CD8-positive, alpha-beta T cell (primary cell): ENCODE measurements at regions of chr5 and their contacts with region 1.

Region 1: GRCh38 chr5:1344975-1345838 is at the start of gene CLPTM1L:
- DNase-seq: peak; percentile 71 to 96 (median 88)
- ATAC-seq: peak; percentile 95
- H3K4me3 ChIP-seq: peak within 1 kb of the TSS; percentile 81 to 98
- H3K4me3 Mint-ChIP-seq: peak within 1 kb of the TSS; percentile 85
- H3K27ac ChIP-seq: peak within 1 kb of the TSS; percentile 82 to 89
- H3K27ac Mint-ChIP-seq: peak within 1 kb of the TSS; percentile 81
- H3K4me1 ChIP-seq: peaks cover 23% of the 10 kb centered on the region
- H3K4me1 Mint-ChIP-seq: peaks cover 28% of the 10 kb centered on the region
- H3K27me3 ChIP-seq: no peaks in the 10 kb centered on the region
- H3K27me3 Mint-ChIP-seq: no peaks in the 10 kb centered on the region
- CTCF ChIP-seq: no peak
- total RNA-seq, gene CLPTM1L: 56.8 to 58.9 TPM

Region 2: GRCh38 chr5:1167728-1168709 is 177.2 kb before region 1 on chr5:
- CTCF ChIA-PET with region 1: interaction called, 4 read pairs
- POLR2A ChIA-PET with region 1: no interaction called
- intact Hi-C with region 1: loop called (anchors 1 to 5 kb)
- DNase-seq: peak; percentile 31 to 83 (median 71)
- ATAC-seq: peak; percentile 86
- H3K4me3 ChIP-seq: peak overlapping the region; percentile 19 to 31
- H3K4me3 Mint-ChIP-seq: peak overlapping the region; percentile 80
- H3K27ac ChIP-seq: no peak overlapping the region
- H3K27ac Mint-ChIP-seq: no peak overlapping the region
- H3K4me1 ChIP-seq: peaks cover 7% of the 10 kb centered on the region
- H3K4me1 Mint-ChIP-seq: peaks cover 16% of the 10 kb centered on the region
- H3K27me3 ChIP-seq: peaks cover 0 to 3% of the 10 kb centered on the region in 2 experiments
- H3K27me3 Mint-ChIP-seq: peaks cover 6% of the 10 kb centered on the region
- CTCF ChIP-seq: peak; percentile 87

Region 3: DNA sequence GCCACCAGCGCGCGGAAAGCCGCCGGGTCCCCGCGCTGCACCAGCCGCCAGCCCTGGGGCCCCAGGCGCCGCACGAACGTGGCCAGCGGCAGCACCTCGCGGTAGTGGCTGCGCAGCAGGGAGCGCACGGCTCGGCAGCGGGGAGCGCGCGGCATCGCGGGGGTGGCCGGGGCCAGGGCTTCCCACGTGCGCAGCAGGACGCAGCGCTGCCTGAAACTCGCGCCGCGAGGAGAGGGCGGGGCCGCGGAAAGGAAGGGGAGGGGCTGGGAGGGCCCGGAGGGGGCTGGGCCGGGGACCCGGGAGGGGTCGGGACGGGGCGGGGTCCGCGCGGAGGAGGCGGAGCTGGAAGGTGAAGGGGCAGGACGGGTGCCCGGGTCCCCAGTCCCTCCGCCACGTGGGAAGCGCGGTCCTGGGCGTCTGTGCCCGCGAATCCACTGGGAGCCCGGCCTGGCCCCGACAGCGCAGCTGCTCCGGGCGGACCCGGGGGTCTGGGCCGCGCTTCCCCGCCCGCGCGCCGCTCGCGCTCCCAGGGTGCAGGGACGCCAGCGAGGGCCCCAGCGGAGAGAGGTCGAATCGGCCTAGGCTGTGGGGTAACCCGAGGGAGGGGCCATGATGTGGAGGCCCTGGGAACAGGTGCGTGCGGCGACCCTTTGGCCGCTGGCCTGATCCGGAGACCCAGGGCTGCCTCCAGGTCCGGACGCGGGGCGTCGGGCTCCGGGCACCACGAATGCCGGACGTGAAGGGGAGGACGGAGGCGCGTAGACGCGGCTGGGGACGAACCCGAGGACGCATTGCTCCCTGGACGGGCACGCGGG is 50.2 kb before region 1 on chr5 and contains the start of gene TERT:
- CTCF ChIA-PET with region 1: no interaction called
- POLR2A ChIA-PET with region 1: no interaction called
- intact Hi-C with region 1: loop called in 1 of 2 experiments (anchors 1 kb)
- DNase-seq: peak; percentile 41 to 71 (median 60)
- ATAC-seq: peak; percentile 87
- H3K4me3 ChIP-seq: peak within 1 kb of the TSS in 1 of 2 experiments; percentile 23
- H3K4me3 Mint-ChIP-seq: peak within 1 kb of the TSS; percentile 58
- H3K27ac ChIP-seq: no peak within 1 kb of the TSS
- H3K27ac Mint-ChIP-seq: no peak within 1 kb of the TSS
- H3K4me1 ChIP-seq: peaks cover 8% of the 10 kb centered on the region
- H3K4me1 Mint-ChIP-seq: peaks cover 4% of the 10 kb centered on the region
- H3K27me3 ChIP-seq: peaks cover 0 to 8% of the 10 kb centered on the region in 2 experiments
- H3K27me3 Mint-ChIP-seq: peaks cover 3% of the 10 kb centered on the region
- CTCF ChIP-seq: no peak
- total RNA-seq, gene TERT: 0.08 TPM in 1 of 2 experiments, not detected in the other

Region 4: GRCh38 chr5:1380011-1380817 is 35.0 kb after region 1 on chr5:
- CTCF ChIA-PET with region 1: interaction called, 11 read pairs
- POLR2A ChIA-PET with region 1: interaction called, 24 read pairs
- intact Hi-C with region 1: no loop called
- DNase-seq: peak; percentile 21 to 80 (median 57)
- ATAC-seq: peak; percentile 92
- H3K4me3 ChIP-seq: peak overlapping the region; percentile 14 to 37
- H3K4me3 Mint-ChIP-seq: peak overlapping the region; percentile 81
- H3K27ac ChIP-seq: no peak overlapping the region
- H3K27ac Mint-ChIP-seq: no peak overlapping the region
- H3K4me1 ChIP-seq: peaks cover 12% of the 10 kb centered on the region
- H3K4me1 Mint-ChIP-seq: peaks cover 8% of the 10 kb centered on the region
- H3K27me3 ChIP-seq: no peaks in the 10 kb centered on the region
- H3K27me3 Mint-ChIP-seq: no peaks in the 10 kb centered on the region
- CTCF ChIP-seq: peak; percentile 85

Region 5: GRCh38 chr5:1523771-1524480 is 178.7 kb after region 1 on chr5 and contains the start of gene LPCAT1:
- CTCF ChIA-PET with region 1: no interaction called
- POLR2A ChIA-PET with region 1: no interaction called
- intact Hi-C with region 1: loop called in 1 of 2 experiments (anchors 2 kb)
- DNase-seq: peak; percentile 49 to 88 (median 73)
- ATAC-seq: peak; percentile 84
- H3K4me3 ChIP-seq: peak within 1 kb of the TSS; percentile 57 to 66
- H3K4me3 Mint-ChIP-seq: peak within 1 kb of the TSS; percentile 81
- H3K27ac ChIP-seq: peak within 1 kb of the TSS; percentile 52 to 78
- H3K27ac Mint-ChIP-seq: peak within 1 kb of the TSS; percentile 82
- H3K4me1 ChIP-seq: peaks cover 33% of the 10 kb centered on the region
- H3K4me1 Mint-ChIP-seq: peaks cover 24% of the 10 kb centered on the region
- H3K27me3 ChIP-seq: no peaks in the 10 kb centered on the region
- H3K27me3 Mint-ChIP-seq: no peaks in the 10 kb centered on the region
- CTCF ChIP-seq: no peak
- total RNA-seq, gene LPCAT1: 28.8 to 29.1 TPM